Psoas muscle (tissue), 8 donors: ENCODE measurements at regions of chr12 and their contacts with region 1.

Region 1: DNA sequence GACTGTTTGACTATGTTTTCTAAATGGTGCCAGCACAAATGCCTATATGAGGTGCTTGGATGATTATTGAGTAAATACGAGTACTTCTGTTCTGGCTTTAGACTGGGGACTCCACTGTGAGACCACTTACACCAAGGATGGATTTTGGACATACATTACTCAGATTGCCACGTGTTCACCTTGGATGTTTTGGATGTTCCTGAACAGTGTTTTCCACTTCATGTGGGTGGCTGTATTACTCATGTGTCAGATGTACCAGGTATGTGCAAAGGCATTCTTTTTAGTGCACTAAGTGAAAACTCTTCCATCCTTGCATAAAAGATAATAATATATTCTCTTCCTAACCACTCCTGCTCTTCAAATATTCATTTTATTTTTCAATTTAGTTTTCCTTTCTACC is 30.7 kb downstream of the CSRP2 start:
- DNase-seq: no peak
- ATAC-seq: no peak
- H3K4me3 ChIP-seq: no peak overlapping the region
- H3K27ac ChIP-seq: no peak overlapping the region
- H3K4me1 ChIP-seq: no peaks in the 10 kb centered on the region
- H3K27me3 ChIP-seq: no peaks in the 10 kb centered on the region
- CTCF ChIP-seq: no peak

Region 2: DNA sequence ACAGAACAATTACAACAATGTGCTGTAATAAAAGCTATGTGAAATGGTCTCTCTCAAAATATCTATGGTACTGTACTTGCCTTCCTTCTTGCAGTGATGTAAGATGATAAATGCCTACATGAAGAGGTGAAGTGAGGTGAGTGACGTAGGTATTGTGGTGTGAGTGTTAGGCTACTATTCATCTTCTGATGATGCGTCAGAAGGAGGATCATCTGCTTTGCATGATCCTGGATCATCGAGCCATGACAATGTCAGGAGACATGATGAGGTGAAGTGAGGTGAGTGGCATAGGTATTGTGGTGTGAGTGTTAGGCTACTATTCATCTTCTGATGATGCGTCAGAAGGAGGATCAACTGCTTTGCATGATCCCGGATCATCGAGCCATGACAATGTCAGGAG is 1744.3 kb before region 1 on chr12:
- intact Hi-C with region 1: loop called in 1 of 2 experiments (anchors 5 kb)
- DNase-seq: no peak
- ATAC-seq: no peak
- H3K4me3 ChIP-seq: no peak overlapping the region
- H3K27ac ChIP-seq: no peak overlapping the region
- H3K4me1 ChIP-seq: no peaks in the 10 kb centered on the region
- H3K27me3 ChIP-seq: no peaks in the 10 kb centered on the region
- CTCF ChIP-seq: no peak

Region 3: GRCh38 chr12:77189458-77189857 is 341.3 kb after region 1 on chr12:
- intact Hi-C with region 1: no loop called
- DNase-seq: no peak
- ATAC-seq: no peak
- H3K4me3 ChIP-seq: no peak overlapping the region
- H3K27ac ChIP-seq: no peak overlapping the region
- H3K4me1 ChIP-seq: no peaks in the 10 kb centered on the region
- H3K27me3 ChIP-seq: no peaks in the 10 kb centered on the region
- CTCF ChIP-seq: no peak